ENCODE measurements at regions of chr6 and their contacts with region 1.

Region 1: DNA sequence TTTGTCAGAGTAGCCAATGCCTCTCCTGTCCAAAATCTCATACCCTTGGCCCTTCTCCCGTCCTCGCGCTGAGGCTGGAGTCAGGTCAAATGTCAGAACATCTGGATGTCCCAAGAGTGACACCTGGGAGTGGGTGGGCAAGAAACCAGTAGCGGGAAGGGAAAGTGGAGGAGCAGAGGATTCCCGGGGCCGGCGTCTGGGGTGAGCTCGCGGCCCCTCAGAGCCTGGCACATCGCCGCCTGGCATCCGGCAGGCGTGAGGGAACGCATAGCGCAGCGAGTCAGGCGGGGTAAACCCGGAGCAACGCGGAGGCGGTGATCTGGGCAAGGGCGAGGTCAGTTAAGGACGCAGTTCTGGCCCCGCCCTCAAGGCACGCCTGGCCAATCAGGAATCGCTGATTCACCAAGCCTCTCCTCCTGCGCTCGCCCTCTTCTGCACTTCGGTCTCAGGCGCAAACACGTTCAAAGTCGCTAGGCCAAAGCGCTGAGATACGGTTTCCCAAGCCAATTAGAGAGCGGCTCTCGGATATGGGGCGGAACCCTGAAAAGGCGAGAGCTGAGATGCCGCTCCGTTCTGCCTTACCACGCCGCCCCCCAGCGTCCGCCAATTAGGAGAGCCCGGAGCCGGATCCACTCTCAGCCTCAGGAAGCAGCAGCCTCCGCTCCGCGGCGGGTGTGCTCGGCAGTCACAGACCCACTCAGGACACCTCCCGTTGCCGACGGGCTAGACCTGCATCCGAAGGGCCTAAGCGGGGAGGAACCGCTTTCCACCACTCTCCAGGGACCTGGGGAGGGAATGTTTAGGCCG is 22.5 kb downstream of the VPS52 start:
- DNase-seq: peak; percentile 99
- ATAC-seq: peak; percentile 95
- H3K4me3 ChIP-seq: peak overlapping the region; percentile 78
- H3K27ac ChIP-seq: peak overlapping the region; percentile 94
- H3K4me1 ChIP-seq: peaks cover 10% of the 10 kb centered on the region
- H3K27me3 ChIP-seq: no peaks in the 10 kb centered on the region
- CTCF ChIP-seq: peak in 2 of 3 experiments; percentile 7 to 28; a peak in 2 of 6 replicates
- EP300 ChIP-seq: 0 out of 4 replicates have a peak, but pooled peaks of 1 of the 2 experiments have one; percentile 23
- POLR2A ChIP-seq: peak; percentile 94
- RAD21 ChIP-seq: no peak

Region 2: GRCh38 chr6:32716399-32716798 is 532.7 kb before region 1 on chr6:
- CTCF ChIA-PET with region 1: no interaction called
- POLR2A ChIA-PET with region 1: no interaction called
- RAD21 ChIA-PET with region 1: no interaction called
- SMC1A ChIA-PET with region 1: no interaction called
- in situ Hi-C with region 1: no loop called
- intact Hi-C with region 1: no loop called
- DNase-seq: no peak
- ATAC-seq: no peak
- H3K4me3 ChIP-seq: no peak overlapping the region
- H3K27ac ChIP-seq: no peak overlapping the region
- H3K4me1 ChIP-seq: no peaks in the 10 kb centered on the region
- H3K27me3 ChIP-seq: no peaks in the 10 kb centered on the region
- CTCF ChIP-seq: peak in 2 of 3 experiments; percentile 10 to 14; a peak in 2 of 6 replicates
- EP300 ChIP-seq: no peak
- POLR2A ChIP-seq: no peak
- RAD21 ChIP-seq: 0 out of 2 replicates have a peak, but pooled peaks have one; percentile 5

Region 3: GRCh38 chr6:33000055-33000454 is 249.1 kb before region 1 on chr6:
- CTCF ChIA-PET with region 1: interaction called, 11 read pairs
- POLR2A ChIA-PET with region 1: no interaction called
- RAD21 ChIA-PET with region 1: no interaction called
- SMC1A ChIA-PET with region 1: interaction called, 3 read pairs
- in situ Hi-C with region 1: loop called (anchors 5 kb)
- intact Hi-C with region 1: loop called (anchors 5 kb)
- DNase-seq: no peak
- ATAC-seq: peak; percentile 89
- H3K4me3 ChIP-seq: no peak overlapping the region
- H3K27ac ChIP-seq: no peak overlapping the region
- H3K4me1 ChIP-seq: peaks cover 7% of the 10 kb centered on the region; the same call in 1 of the 2 replicates
- H3K27me3 ChIP-seq: no peaks in the 10 kb centered on the region
- CTCF ChIP-seq: peak; percentile 51 to 60 (median 53)
- EP300 ChIP-seq: no peak
- POLR2A ChIP-seq: no peak
- RAD21 ChIP-seq: peak; percentile 73

Region 4: DNA sequence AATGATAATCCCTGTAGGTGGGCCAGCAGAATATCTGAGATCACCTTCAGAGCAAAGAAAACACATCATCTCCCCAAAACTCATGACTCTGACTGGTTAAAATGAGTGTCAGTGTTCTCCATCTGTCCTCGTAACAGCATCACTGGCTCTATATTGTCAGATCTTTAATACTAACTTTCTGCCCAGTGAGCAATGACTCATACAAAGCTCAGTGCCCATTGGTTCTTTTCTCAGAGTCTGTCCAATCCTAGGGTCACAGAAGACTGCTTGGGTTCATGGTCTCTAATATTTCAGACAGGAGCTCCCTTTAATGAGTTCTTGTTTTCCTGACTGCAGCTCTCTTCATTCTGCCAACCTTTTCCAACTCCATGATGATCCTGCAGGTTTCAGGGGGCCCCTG is 137.0 kb before region 1 on chr6:
- CTCF ChIA-PET with region 1: interaction called, 53 read pairs
- POLR2A ChIA-PET with region 1: interaction called, 5 read pairs
- RAD21 ChIA-PET with region 1: interaction called, 10 read pairs
- SMC1A ChIA-PET with region 1: interaction called, 8 read pairs
- in situ Hi-C with region 1: loop called (anchors 5 kb)
- intact Hi-C with region 1: no loop called
- DNase-seq: peak; percentile 68
- ATAC-seq: peak; percentile 97
- H3K4me3 ChIP-seq: no peak overlapping the region
- H3K27ac ChIP-seq: peak overlapping the region; percentile 41
- H3K4me1 ChIP-seq: peaks cover 40% of the 10 kb centered on the region
- H3K27me3 ChIP-seq: no peaks in the 10 kb centered on the region; a peak in 2 of 4 replicates
- CTCF ChIP-seq: no peak
- EP300 ChIP-seq: no peak
- POLR2A ChIP-seq: no peak
- RAD21 ChIP-seq: no peak

Region 5: GRCh38 chr6:33139596-33140206 is 109.4 kb before region 1 on chr6:
- CTCF ChIA-PET with region 1: interaction called, 10 read pairs
- POLR2A ChIA-PET with region 1: no interaction called
- RAD21 ChIA-PET with region 1: interaction called, 3 read pairs
- SMC1A ChIA-PET with region 1: interaction called, 4 read pairs
- in situ Hi-C with region 1: no loop called
- intact Hi-C with region 1: no loop called
- DNase-seq: no peak
- ATAC-seq: no peak
- H3K4me3 ChIP-seq: no peak overlapping the region
- H3K27ac ChIP-seq: no peak overlapping the region
- H3K4me1 ChIP-seq: peaks cover 8% of the 10 kb centered on the region
- H3K27me3 ChIP-seq: no peaks in the 10 kb centered on the region
- CTCF ChIP-seq: no peak
- EP300 ChIP-seq: no peak
- POLR2A ChIP-seq: no peak
- RAD21 ChIP-seq: no peak

Region 6: GRCh38 chr6:33172688-33173534 is 76.2 kb before region 1 on chr6:
- CTCF ChIA-PET with region 1: interaction called, 26 read pairs
- POLR2A ChIA-PET with region 1: interaction called, 5 read pairs
- RAD21 ChIA-PET with region 1: interaction called, 25 read pairs
- SMC1A ChIA-PET with region 1: interaction called, 7 read pairs
- in situ Hi-C with region 1: no loop called
- intact Hi-C with region 1: loop called (anchors 2 kb)
- DNase-seq: no peak
- ATAC-seq: peak; percentile 39
- H3K4me3 ChIP-seq: no peak overlapping the region
- H3K27ac ChIP-seq: no peak overlapping the region
- H3K4me1 ChIP-seq: no peaks in the 10 kb centered on the region; the same call in 1 of the 2 replicates
- H3K27me3 ChIP-seq: no peaks in the 10 kb centered on the region
- CTCF ChIP-seq: peak; percentile 80 to 83 (median 83)
- EP300 ChIP-seq: no peak
- POLR2A ChIP-seq: no peak
- RAD21 ChIP-seq: peak; percentile 96

Region 7: GRCh38 chr6:33271458-33272274 is 22.5 kb after region 1 on chr6 and contains the starts of genes RPS18 and VPS52:
- CTCF ChIA-PET with region 1: interaction called, 23 read pairs
- POLR2A ChIA-PET with region 1: interaction called, 40 read pairs
- RAD21 ChIA-PET with region 1: interaction called, 5 read pairs
- SMC1A ChIA-PET with region 1: interaction called, 6 read pairs
- in situ Hi-C with region 1: no loop called
- intact Hi-C with region 1: no loop called
- DNase-seq: peak; percentile 96
- ATAC-seq: peak; percentile 87
- H3K4me3 ChIP-seq: peak within 1 kb of the TSS; percentile 88
- H3K27ac ChIP-seq: peak within 1 kb of the TSS; percentile 97
- H3K4me1 ChIP-seq: peaks cover 18% of the 10 kb centered on the region
- H3K27me3 ChIP-seq: no peaks in the 10 kb centered on the region
- CTCF ChIP-seq: no peak
- EP300 ChIP-seq: peak in 1 of 2 experiments; percentile 52; a peak in 2 of 4 replicates
- POLR2A ChIP-seq: peak; percentile 100
- RAD21 ChIP-seq: no peak
- polyA plus RNA-seq, gene RPS18: 17,270 to 20,828 TPM
- polyA plus RNA-seq, gene VPS52: 11.3 to 13.2 TPM

Region 8: DNA sequence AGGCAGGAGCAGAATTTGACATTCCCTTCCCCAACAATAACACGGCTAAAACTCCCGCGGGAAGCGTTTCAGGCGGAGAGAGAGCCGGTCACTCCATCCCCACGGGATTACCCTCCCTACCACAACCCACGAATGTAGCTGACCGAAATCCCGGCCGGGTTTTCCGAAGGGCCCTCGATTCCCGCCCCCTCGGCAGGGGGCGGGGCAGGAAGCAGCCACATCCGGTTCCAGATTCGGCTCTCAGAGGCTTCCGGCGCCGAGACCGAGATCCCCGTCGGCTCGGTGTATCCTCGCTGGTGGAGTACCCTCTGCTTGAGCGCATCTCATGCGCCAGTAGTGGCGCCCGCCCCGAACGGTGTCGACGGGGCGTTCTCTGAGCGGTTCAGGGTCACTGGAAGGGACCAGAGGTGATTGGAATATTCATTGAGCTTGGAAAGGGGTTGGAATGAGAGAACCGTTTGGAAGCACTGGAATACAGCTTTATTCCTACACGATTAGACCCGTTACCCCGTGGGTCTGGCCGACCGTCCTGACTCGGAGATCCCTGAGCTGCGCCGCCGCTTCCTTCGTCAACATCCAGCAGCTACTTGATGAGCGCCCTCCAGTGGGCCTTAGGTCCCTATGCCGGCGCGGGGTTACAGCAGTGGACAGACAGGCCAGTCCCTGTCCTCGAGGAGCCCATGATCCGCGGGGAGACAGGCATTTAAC is 50.3 kb after region 1 on chr6:
- CTCF ChIA-PET with region 1: interaction called, 16 read pairs
- POLR2A ChIA-PET with region 1: interaction called, 7 read pairs
- RAD21 ChIA-PET with region 1: interaction called, 7 read pairs
- SMC1A ChIA-PET with region 1: no interaction called
- in situ Hi-C with region 1: no loop called
- intact Hi-C with region 1: no loop called
- DNase-seq: peak; percentile 69
- ATAC-seq: peak; percentile 89
- H3K4me3 ChIP-seq: peak overlapping the region; percentile 100
- H3K27ac ChIP-seq: peak overlapping the region; percentile 86
- H3K4me1 ChIP-seq: peaks cover 11% of the 10 kb centered on the region
- H3K27me3 ChIP-seq: no peaks in the 10 kb centered on the region
- CTCF ChIP-seq: peak; percentile 58 to 72 (median 69)
- EP300 ChIP-seq: peak in 1 of 2 experiments; percentile 47; a peak in 1 of 4 replicates
- POLR2A ChIP-seq: peak; percentile 94
- RAD21 ChIP-seq: no peak